IMR-90 (cell line): ENCODE measurements at regions of chr9 and their contacts with region 1.

Region 1: GRCh38 chr9:129177791-129178559 is at the start of gene IER5L:
- DNase-seq: peak; percentile 94
- ATAC-seq: peak; percentile 70
- H3K4me3 ChIP-seq: peak within 1 kb of the TSS; percentile 89
- H3K27ac ChIP-seq: peak within 1 kb of the TSS; percentile 97
- H3K4me1 ChIP-seq: peaks cover 9% of the 10 kb centered on the region
- H3K27me3 ChIP-seq: no peaks in the 10 kb centered on the region
- CTCF ChIP-seq: 0 out of 2 replicates have a peak, but pooled peaks have one; percentile 3
- POLR2A ChIP-seq: peak; percentile 100
- RAD21 ChIP-seq: 0 out of 2 replicates have a peak, but pooled peaks have one; percentile 4
- total RNA-seq, gene IER5L: 12.5 and 14.4 TPM in 2 replicates

Region 2: GRCh38 chr9:129139993-129140396 is 38.0 kb before region 1 on chr9:
- CTCF ChIA-PET with region 1: interaction called, 21 read pairs
- POLR2A ChIA-PET with region 1: interaction called, 17 read pairs
- dilution Hi-C with region 1: no loop called
- in situ Hi-C with region 1: no loop called
- intact Hi-C with region 1: loop called (anchors 1 kb)
- DNase-seq: peak; percentile 100
- ATAC-seq: peak; percentile 64
- H3K4me3 ChIP-seq: peak overlapping the region; percentile 28
- H3K27ac ChIP-seq: peak overlapping the region; percentile 98
- H3K4me1 ChIP-seq: peaks cover 49% of the 10 kb centered on the region
- H3K27me3 ChIP-seq: no peaks in the 10 kb centered on the region
- CTCF ChIP-seq: no peak
- POLR2A ChIP-seq: peak; percentile 86
- RAD21 ChIP-seq: peak; percentile 32

Region 3: DNA sequence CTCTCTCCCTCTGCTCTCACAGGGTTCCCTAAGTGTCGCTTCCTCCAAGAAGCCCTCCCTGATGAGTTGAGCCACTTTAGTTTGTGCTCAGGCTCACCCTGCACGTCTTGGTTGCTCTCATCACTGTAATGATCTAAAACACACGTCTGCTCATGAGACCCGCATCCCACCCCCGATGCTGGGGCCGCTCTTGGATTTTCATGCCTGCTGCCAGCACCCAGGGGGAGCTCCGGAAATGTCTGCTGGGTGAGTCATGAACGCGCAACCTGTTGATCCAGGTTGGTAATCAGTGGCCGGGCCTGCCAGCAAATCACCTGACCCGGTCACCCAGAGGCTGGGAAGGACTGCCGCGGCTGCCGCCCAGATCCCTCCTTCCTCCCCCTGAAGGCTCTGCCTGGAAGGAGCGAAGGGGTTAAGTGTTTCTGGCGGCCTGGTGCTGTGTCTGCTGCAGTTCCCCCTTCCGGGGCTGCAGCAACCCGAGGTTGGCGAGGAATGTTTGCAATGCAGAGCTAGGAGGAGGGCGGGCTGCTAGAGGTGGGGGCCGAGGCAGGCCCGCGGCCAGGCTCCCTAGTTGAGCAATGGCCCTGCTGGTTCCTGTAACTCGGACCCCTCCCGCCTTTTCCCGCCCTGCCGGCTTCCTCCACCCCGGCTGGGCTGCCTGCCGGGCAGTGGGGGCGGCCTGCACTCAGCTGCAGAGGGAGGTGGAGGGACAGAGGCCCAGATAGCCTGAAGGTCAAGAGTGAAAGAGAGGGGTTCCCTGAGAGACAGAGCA is 156.2 kb after region 1 on chr9:
- CTCF ChIA-PET with region 1: no interaction called
- POLR2A ChIA-PET with region 1: interaction called, 5 read pairs
- dilution Hi-C with region 1: no loop called
- in situ Hi-C with region 1: no loop called
- intact Hi-C with region 1: loop called (anchors 2 kb)
- DNase-seq: peak; percentile 92
- ATAC-seq: peak; percentile 92
- H3K4me3 ChIP-seq: no peak overlapping the region
- H3K27ac ChIP-seq: peak overlapping the region; percentile 91
- H3K4me1 ChIP-seq: peaks cover 38% of the 10 kb centered on the region
- H3K27me3 ChIP-seq: no peaks in the 10 kb centered on the region
- CTCF ChIP-seq: 0 out of 2 replicates have a peak, but pooled peaks have one; percentile 9
- POLR2A ChIP-seq: no peak
- RAD21 ChIP-seq: peak; percentile 27

Region 4: DNA sequence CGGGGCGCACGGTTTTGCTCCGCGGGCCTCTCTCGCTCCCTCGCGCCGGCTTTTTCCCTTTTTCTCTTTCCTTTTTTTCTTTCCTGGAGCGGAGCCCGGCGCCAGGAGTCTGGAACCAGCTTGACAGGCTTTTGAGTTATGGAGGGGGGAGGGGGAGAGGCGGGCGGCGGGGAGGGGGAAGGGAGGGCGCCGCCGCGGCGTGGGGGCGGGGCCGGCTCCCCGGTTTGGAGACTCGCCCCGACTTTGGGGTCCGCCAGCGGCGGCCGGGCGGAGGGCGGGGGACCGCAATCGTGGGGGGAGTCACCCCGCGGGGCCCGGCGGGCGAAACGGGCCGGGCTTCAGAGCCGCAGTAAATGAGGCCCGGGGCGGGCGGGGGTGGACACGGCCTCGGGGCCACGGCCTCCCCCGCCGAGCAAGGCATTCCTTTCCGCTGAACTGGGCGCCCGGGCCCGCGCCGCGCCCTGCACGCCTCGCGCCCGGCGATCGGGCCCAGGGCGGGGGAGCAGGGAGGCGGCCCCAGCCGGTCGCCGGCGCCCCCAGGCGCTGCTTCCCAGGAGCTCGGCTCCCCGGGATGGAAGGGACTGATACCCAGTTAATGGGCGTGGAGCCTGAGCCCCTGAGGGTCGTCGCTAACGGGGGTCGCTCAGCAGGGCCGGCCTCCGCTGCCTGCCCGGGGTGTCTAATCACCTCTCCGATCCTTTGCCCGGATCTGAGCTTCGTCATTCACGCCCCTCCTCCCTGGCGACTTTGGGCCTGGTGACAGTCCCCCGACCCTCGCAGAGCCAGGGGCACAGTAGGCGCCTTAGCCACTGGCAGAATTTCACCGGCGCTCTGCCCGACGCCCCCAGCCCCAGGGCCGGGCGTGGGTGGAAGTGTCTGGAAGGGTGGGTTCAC is 304.8 kb after region 1 on chr9:
- CTCF ChIA-PET with region 1: interaction called, 3 read pairs
- POLR2A ChIA-PET with region 1: interaction called, 14 read pairs
- dilution Hi-C with region 1: no loop called
- in situ Hi-C with region 1: no loop called
- intact Hi-C with region 1: loop called (anchors 1 kb)
- DNase-seq: peak; percentile 84
- ATAC-seq: peak; percentile 86
- H3K4me3 ChIP-seq: no peak overlapping the region
- H3K27ac ChIP-seq: peak overlapping the region; percentile 99
- H3K4me1 ChIP-seq: peaks cover 49% of the 10 kb centered on the region
- H3K27me3 ChIP-seq: no peaks in the 10 kb centered on the region
- CTCF ChIP-seq: peak; percentile 43
- POLR2A ChIP-seq: peak; percentile 30
- RAD21 ChIP-seq: peak; percentile 59

Region 5: GRCh38 chr9:129550199-129550839 is 372.3 kb after region 1 on chr9:
- CTCF ChIA-PET with region 1: no interaction called
- POLR2A ChIA-PET with region 1: no interaction called
- dilution Hi-C with region 1: no loop called
- in situ Hi-C with region 1: no loop called
- intact Hi-C with region 1: loop called (anchors 5 kb)
- DNase-seq: peak; percentile 70
- ATAC-seq: peak; percentile 94
- H3K4me3 ChIP-seq: peak overlapping the region; percentile 45
- H3K27ac ChIP-seq: peak overlapping the region; percentile 92
- H3K4me1 ChIP-seq: peaks cover 14% of the 10 kb centered on the region
- H3K27me3 ChIP-seq: no peaks in the 10 kb centered on the region
- CTCF ChIP-seq: no peak
- POLR2A ChIP-seq: no peak
- RAD21 ChIP-seq: no peak

Region 6: DNA sequence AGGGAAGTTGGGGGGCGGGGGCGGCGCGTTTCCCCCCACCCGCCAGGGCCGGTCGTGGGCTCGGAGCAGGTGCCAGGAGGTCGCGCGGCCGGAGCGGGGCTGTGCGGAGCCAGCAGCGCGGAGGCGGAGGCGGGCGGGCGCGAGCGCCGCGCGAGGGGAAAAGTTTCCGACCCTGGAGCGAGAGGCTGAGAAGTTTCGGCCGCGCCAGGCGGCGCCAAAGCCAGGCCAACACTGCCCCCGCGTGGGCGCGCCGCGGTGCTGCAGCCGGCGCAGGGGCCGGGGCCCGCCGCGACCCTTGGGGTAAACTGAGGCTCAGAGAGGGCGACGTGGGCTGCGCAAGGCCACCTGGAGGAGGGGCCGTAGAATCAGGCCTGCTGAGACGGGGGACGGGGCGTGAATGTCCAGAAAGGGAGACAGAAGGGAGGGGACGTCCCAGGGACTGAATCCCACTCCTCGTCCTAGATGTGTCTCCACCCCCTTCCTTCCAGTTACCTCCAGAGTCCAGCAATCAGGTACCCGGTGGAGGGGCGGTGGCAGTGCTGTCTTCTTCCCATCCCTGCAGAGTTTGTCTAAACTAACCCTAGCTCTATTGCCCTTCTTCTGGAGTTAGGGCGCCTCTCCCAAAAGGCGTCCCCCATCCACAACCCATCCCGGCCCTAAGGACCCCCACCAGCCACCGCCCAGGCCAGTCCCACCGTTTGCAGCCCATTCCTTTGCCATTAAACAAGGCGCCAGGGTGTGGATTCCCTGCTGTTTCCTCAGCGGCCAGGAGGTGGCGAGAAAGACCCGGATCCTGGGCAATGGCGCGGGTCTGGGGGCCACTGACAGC is 432.7 kb after region 1 on chr9:
- CTCF ChIA-PET with region 1: no interaction called
- POLR2A ChIA-PET with region 1: no interaction called
- dilution Hi-C with region 1: no loop called
- in situ Hi-C with region 1: no loop called
- intact Hi-C with region 1: loop called (anchors 1 kb)
- DNase-seq: peak; percentile 58
- ATAC-seq: peak; percentile 84
- H3K4me3 ChIP-seq: peak overlapping the region; percentile 70
- H3K27ac ChIP-seq: peak overlapping the region; percentile 98
- H3K4me1 ChIP-seq: peaks cover 16% of the 10 kb centered on the region
- H3K27me3 ChIP-seq: no peaks in the 10 kb centered on the region
- CTCF ChIP-seq: peak; percentile 94
- POLR2A ChIP-seq: peak; percentile 40; the same call in 1 of the 2 replicates
- RAD21 ChIP-seq: peak; percentile 99